Activated CD4-positive, alpha-beta T cell treated with anti-CD3 and anti-CD28 coated beads for 36 hours (primary cell): ENCODE measurements at regions of chr1 and their contacts with region 1.

Region 1: GRCh38 chr1:185156854-185157598 is at the starts of genes SWT1 and TRMT1L:
- DNase-seq: peak; percentile 99
- ATAC-seq: peak; percentile 94
- H3K4me3 Mint-ChIP-seq: peak within 1 kb of the TSS; percentile 91
- H3K27ac Mint-ChIP-seq: peak within 1 kb of the TSS; percentile 95
- H3K4me1 Mint-ChIP-seq: peaks cover 50% of the 10 kb centered on the region
- H3K27me3 Mint-ChIP-seq: no peaks in the 10 kb centered on the region
- total RNA-seq, gene SWT1: 3.0 to 3.3 TPM
- total RNA-seq, gene TRMT1L: 33.7 to 38.7 TPM

Region 2: DNA sequence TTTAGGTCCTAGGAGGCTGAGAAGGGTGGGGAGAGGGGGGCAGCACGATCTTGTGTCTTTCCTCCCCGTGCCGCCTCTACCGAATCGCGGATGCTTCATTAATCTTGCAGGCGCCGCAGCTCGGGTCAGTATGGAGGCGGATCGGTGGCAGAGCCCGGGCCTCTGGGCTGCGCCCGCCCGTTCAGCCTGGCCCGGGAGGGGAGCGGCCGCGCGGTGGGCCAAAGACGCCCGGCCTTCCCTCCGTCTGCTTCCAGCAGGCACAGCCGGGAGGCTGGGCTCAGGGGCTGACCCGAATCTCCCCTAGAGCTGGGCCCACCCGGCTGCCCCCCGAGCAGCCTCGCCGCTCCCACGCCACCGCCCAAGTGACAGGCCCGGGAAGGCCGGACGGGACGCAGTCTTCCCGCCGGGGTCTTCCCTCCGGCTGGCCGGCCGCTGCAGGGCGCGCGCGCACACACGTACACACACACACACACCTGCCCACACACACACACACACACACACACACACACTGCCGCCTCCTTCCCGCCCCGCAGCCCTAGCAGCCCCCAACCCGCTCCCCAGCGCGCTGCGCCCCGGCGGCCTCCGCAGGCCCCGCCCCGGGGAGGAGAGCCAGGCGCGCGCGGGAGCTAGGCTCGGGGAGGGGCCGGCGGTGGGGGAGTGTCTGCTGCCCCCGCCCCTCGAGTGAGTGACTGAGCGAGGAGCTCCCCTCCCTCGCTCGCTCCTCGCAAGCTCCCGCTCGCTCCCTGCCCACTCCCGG is 770.5 kb before region 1 on chr1 and contains the start of gene C1orf21:
- CTCF ChIA-PET with region 1: no interaction called
- POLR2A ChIA-PET with region 1: no interaction called
- intact Hi-C with region 1: loop called in 1 of 2 experiments (anchors 2 kb)
- DNase-seq: peak; percentile 89
- ATAC-seq: peak; percentile 95
- H3K4me3 Mint-ChIP-seq: peak within 1 kb of the TSS; percentile 66
- H3K27ac Mint-ChIP-seq: peak within 1 kb of the TSS; percentile 38
- H3K4me1 Mint-ChIP-seq: peaks cover 12% of the 10 kb centered on the region
- H3K27me3 Mint-ChIP-seq: peaks cover 44% of the 10 kb centered on the region
- total RNA-seq, gene C1orf21: 2.6 to 6.1 TPM

Region 3: GRCh38 chr1:185044981-185045813 is 111.8 kb before region 1 on chr1 and contains the start of gene RNF2:
- CTCF ChIA-PET with region 1: no interaction called
- POLR2A ChIA-PET with region 1: no interaction called
- intact Hi-C with region 1: loop called (anchors 1 to 2 kb)
- DNase-seq: peak; percentile 87
- ATAC-seq: peak; percentile 87
- H3K4me3 Mint-ChIP-seq: peak within 1 kb of the TSS; percentile 94
- H3K27ac Mint-ChIP-seq: peak within 1 kb of the TSS; percentile 86
- H3K4me1 Mint-ChIP-seq: peaks cover 34% of the 10 kb centered on the region
- H3K27me3 Mint-ChIP-seq: no peaks in the 10 kb centered on the region
- total RNA-seq, gene RNF2: 19.6 to 23.6 TPM

Region 4: DNA sequence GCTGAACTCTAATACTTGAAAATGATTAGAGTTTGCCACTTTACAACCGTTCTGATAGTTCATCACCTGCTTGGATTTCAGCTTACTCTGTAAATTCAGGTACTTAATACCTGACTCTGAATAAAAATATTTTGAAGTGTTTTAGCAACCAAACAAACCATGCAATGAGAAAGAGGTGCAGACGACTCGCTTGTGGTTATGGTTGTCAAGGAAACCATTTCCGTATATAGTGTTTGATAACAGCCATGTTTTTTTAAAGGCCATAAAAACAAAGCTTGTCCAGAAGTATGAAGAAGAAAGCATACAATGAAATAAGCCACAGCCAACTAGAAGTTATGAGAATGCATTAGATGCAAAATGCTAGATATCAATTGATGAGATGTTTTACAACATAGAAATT is 410.0 kb after region 1 on chr1:
- CTCF ChIA-PET with region 1: no interaction called
- POLR2A ChIA-PET with region 1: no interaction called
- intact Hi-C with region 1: loop called in 1 of 2 experiments (anchors 2 kb)
- DNase-seq: peak; percentile 41
- ATAC-seq: peak; percentile 57
- H3K4me3 Mint-ChIP-seq: peak overlapping the region; percentile 22
- H3K27ac Mint-ChIP-seq: peak overlapping the region; percentile 79
- H3K4me1 Mint-ChIP-seq: peaks cover 70% of the 10 kb centered on the region
- H3K27me3 Mint-ChIP-seq: no peaks in the 10 kb centered on the region